ENCODE measurements at regions of chr15 and their contacts with region 1.

Region 1: DNA sequence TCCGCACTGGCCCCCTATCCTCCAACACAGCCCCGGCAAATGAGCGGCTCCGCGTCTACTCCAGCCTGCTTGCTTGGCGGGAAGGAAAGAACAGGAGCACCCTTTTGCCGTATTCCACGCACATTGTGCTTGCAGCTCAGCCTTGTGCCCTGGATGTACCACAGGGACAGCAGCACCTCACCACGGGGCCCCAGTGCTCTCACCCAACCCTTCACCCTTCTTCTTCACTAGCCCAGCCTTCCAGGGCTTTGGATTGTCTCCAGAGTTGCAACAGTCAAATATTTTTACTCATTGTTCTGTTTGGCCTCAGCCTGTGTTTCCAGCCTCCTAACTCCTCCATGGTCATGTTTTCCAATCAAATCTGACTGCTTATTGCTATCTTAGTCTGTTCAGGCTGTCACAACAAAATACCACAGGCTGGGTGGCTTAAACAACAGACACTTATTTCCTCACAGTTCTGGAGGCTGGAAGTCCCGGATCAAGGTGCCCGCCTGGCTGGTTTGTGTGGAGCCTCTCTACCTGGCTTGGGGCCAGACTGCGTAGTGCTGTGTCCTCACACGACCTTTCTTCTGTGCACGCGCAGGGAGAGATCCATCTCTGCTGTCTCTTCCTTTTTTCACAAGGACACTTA is 79.2 kb upstream of the ABHD17C start:
- DNase-seq: peak; percentile 41 to 77 (median 67)
- ATAC-seq: peak; percentile 44 to 84 (median 76)
- H3K4me3 ChIP-seq: no peak overlapping the region
- H3K27ac ChIP-seq: peak overlapping the region in 1 of 12 donors; percentile 19
- H3K4me1 ChIP-seq: peaks cover 0 to 11% (median 6%) of the 10 kb centered on the region in 12 donors
- H3K27me3 ChIP-seq: no peaks in the 10 kb centered on the region
- CTCF ChIP-seq: no peak
- POLR2A ChIP-seq: no peak

Region 2: GRCh38 chr15:80695104-80695910 is 79.4 kb after region 1 on chr15 and contains the start of gene ABHD17C:
- intact Hi-C with region 1: loop called in 1 of 10 experiments (anchors 5 kb)
- DNase-seq: peak; percentile 60 to 84 (median 68)
- ATAC-seq: peak; percentile 56 to 89 (median 82)
- H3K4me3 ChIP-seq: peak within 1 kb of the TSS; percentile 63 to 99 (median 83)
- H3K27ac ChIP-seq: peak within 1 kb of the TSS; percentile 67 to 90 (median 82)
- H3K4me1 ChIP-seq: peaks cover 0 to 30% (median 15%) of the 10 kb centered on the region in 12 donors
- H3K27me3 ChIP-seq: no peaks in the 10 kb centered on the region
- CTCF ChIP-seq: no peak
- POLR2A ChIP-seq: no peak
- total RNA-seq, gene ABHD17C: 2.8 to 10.2 (median 5.6) TPM

Measured in heart left ventricle (tissue), 16 donors.